Activated naive CD4-positive, alpha-beta T cell treated with anti-CD3 and anti-CD28 coated beads for 36 hours (primary cell): ENCODE measurements at regions of chr14 and their contacts with region 1.

Region 1: GRCh38 chr14:53929871-53930715 is 26.5 kb downstream of the BMP4 start:
- DNase-seq: peak; percentile 63
- H3K4me3 Mint-ChIP-seq: no peak overlapping the region
- H3K27ac Mint-ChIP-seq: no peak overlapping the region
- H3K4me1 Mint-ChIP-seq: no peaks in the 10 kb centered on the region
- H3K27me3 Mint-ChIP-seq: peaks cover 11% of the 10 kb centered on the region

Region 2: DNA sequence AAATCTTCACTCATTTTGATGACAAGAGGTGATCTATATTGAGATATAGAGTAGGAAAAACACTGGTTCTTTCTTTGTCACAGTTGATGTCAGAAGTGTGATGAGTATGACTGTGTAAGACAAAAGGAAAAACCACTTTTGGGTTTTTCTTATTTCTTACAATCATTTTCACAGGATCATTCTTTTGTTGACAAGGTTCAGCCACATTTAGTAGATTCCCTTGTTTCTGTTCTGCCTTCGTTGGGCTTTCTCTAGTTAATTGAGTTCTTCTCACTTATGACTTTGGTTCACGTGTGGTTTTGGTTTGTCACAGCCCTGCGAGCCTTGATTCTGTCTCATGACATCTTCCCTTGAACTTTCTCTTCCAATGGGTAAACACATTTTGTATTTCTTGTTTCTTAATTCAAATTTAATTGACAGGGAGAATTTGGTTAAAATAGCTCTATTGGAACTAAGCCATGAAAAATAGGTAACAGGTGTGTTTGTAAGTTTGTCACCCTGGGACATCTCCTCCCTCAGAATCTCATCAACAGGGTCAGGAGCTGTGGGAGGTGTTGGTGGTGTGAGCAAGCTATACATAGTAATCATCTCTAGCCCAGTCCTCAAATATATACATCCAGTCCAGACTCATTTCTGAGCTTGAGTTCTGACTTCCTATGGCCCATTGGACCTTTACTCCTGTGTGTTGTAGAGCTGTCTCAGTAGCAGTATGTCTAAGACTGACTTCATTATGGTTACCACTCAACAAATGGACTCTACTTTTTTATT is 228.8 kb before region 1 on chr14:
- CTCF ChIA-PET with region 1: no interaction called
- intact Hi-C with region 1: no loop called
- DNase-seq: no peak
- H3K4me3 Mint-ChIP-seq: no peak overlapping the region
- H3K27ac Mint-ChIP-seq: no peak overlapping the region
- H3K4me1 Mint-ChIP-seq: no peaks in the 10 kb centered on the region
- H3K27me3 Mint-ChIP-seq: no peaks in the 10 kb centered on the region

Region 3: GRCh38 chr14:54175298-54175942 is 245.3 kb after region 1 on chr14:
- CTCF ChIA-PET with region 1: interaction called, 11 read pairs
- intact Hi-C with region 1: loop called (anchors 2 kb)
- DNase-seq: peak; percentile 73
- H3K4me3 Mint-ChIP-seq: no peak overlapping the region
- H3K27ac Mint-ChIP-seq: no peak overlapping the region
- H3K4me1 Mint-ChIP-seq: peaks cover 4% of the 10 kb centered on the region
- H3K27me3 Mint-ChIP-seq: peaks cover 28% of the 10 kb centered on the region

Region 4: DNA sequence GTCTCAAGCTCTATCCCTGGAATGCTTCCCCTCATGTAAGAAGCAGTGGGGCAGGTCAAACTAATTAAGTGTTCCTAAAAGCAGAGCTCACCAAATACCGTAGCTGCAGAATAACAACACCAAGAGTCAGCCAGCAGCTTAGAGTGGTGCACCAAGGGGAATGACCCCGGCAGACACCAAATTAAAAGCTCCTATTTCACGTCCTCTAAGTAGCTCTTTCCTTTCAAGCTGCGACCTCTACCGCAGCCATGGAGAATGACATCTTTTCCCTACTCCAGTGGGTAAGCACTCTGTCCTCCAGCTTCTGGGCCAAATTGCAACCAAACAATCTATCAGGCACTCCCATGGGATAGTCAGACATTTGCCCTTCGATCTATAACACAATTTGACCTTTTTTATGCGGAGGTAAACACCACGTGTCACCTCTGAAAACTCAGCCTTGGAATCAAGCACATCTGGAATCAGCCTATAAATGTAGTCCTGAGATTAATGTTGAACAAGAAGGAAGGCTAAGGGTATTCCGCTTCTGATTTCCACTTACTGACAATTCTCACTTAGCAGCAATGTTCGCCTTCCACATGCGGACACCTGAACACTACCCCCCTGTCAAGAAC is 399.1 kb after region 1 on chr14:
- CTCF ChIA-PET with region 1: interaction called, 6 read pairs
- intact Hi-C with region 1: loop called (anchors 1 kb)
- DNase-seq: peak; percentile 40
- H3K4me3 Mint-ChIP-seq: no peak overlapping the region
- H3K27ac Mint-ChIP-seq: no peak overlapping the region
- H3K4me1 Mint-ChIP-seq: no peaks in the 10 kb centered on the region
- H3K27me3 Mint-ChIP-seq: peaks cover 9% of the 10 kb centered on the region